AG04450 (cell line): ENCODE measurements at regions of chr3 and their contacts with region 1.

Region 1: DNA sequence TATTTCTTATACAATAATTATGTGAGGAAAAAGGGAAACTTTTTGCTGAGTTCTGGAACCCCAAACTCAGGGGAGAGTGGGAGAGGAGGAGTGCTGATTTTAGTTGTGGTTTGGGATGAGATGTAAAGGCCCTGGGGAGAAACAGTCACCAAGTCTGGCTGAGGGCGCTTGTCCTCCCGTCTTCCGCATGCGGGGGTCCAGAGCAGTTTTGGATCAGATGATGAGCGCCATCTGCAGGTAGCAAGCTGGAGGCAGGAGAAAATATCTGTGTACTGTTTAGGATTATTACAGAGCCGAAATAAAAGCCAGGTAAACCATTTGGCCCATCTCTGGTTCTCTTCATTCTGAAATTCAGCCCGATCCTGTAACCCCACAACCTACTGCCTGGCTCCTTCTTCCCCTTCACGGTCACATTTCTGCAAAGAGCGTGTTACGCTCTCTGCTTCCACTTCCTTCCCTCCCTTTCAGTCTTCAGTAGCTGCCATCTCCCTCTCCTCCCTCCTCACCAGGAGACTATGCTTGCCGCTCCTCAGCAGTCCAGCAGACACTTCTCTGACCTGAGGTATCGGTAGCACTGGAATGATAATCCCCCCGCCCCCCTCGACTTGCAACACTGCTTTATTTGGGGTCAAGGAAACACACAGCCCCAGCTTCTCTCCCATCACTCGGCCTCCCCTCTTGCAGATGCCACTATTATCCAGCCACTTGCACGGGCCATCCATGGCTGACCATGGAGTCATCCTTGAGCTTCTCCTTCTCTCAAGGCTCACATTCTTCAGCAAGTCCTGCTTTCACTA is 1.4 kb upstream of the PARP14 start:
- DNase-seq: peak; percentile 55
- H3K4me3 ChIP-seq: peak overlapping the region; percentile 43
- H3K27ac ChIP-seq: peak overlapping the region; percentile 34
- H3K27me3 ChIP-seq: no peaks in the 10 kb centered on the region
- CTCF ChIP-seq: peak; percentile 87

Region 2: GRCh38 chr3:121545574-121546455 is 1133.5 kb before region 1 on chr3 and contains the start of gene POLQ:
- CTCF ChIA-PET with region 1: interaction called, 10 read pairs
- POLR2A ChIA-PET with region 1: no interaction called
- DNase-seq: peak; percentile 85
- H3K4me3 ChIP-seq: peak within 1 kb of the TSS; percentile 82
- H3K27ac ChIP-seq: no peak within 1 kb of the TSS
- H3K27me3 ChIP-seq: no peaks in the 10 kb centered on the region
- CTCF ChIP-seq: no peak
- polyA plus RNA-seq, gene POLQ: 0.96 and 1.4 TPM in 2 replicates

Region 3: GRCh38 chr3:122415720-122416654 is 263.3 kb before region 1 on chr3 and contains the start of gene WDR5B:
- CTCF ChIA-PET with region 1: interaction called, 11 read pairs
- POLR2A ChIA-PET with region 1: no interaction called
- DNase-seq: peak; percentile 94
- H3K4me3 ChIP-seq: peak within 1 kb of the TSS; percentile 95
- H3K27ac ChIP-seq: peak within 1 kb of the TSS; percentile 90
- H3K27me3 ChIP-seq: no peaks in the 10 kb centered on the region
- CTCF ChIP-seq: 0 out of 2 replicates have a peak, but pooled peaks have one; percentile 23
- polyA plus RNA-seq, gene WDR5B: 5.7 and 8.5 TPM in 2 replicates

Region 4: GRCh38 chr3:122564155-122564912 is 114.9 kb before region 1 on chr3 and contains the starts of genes DTX3L and PARP9:
- CTCF ChIA-PET with region 1: interaction called, 129 read pairs
- POLR2A ChIA-PET with region 1: interaction called, 4 read pairs
- DNase-seq: no peak
- H3K4me3 ChIP-seq: peak within 1 kb of the TSS; percentile 82
- H3K27ac ChIP-seq: peak within 1 kb of the TSS; percentile 73
- H3K27me3 ChIP-seq: no peaks in the 10 kb centered on the region
- CTCF ChIP-seq: no peak
- polyA plus RNA-seq, gene DTX3L: 7.0 and 8.3 TPM in 2 replicates
- polyA plus RNA-seq, gene PARP9: 18.9 and 24.4 TPM in 2 replicates

Region 5: DNA sequence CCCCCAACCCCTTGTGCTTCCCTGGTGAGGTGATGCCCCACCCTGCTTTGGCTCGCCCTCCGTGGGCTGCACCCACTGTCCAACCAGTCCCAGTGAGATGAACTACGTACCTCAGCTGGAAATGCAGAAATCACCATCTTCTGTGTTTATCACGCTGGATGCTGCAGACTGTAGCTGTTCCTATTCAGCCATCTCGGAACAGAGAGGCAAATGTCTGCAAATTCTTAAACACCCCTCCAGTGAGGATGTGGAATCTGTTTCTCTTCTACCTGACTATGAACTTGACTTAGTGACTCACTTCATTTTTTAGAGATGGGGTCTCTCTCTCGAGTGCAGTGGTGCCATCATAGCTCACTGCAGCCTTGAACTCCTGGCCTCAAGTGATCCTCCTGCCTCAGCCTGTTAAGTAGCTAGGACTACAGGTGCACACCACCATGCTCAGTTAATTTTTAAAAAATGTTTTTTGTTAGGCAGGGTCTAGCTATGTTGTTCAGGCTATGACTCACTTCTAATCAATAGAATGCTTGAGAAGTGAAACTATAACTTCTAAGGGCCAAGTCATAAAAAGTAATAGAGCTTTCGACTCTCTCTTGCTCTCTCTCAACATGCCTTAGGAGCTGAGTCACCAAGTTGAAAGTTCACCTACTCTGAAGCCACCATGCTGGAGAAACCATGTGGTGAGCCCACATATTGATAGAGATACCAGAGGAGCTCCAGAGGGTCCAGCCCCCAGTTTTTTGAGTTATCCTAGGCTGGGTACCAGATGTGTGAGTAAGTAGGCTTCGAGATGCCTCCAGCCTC is 10.2 kb before region 1 on chr3:
- CTCF ChIA-PET with region 1: interaction called, 26 read pairs
- POLR2A ChIA-PET with region 1: no interaction called
- DNase-seq: peak; percentile 32
- H3K4me3 ChIP-seq: no peak overlapping the region
- H3K27ac ChIP-seq: no peak overlapping the region
- H3K27me3 ChIP-seq: no peaks in the 10 kb centered on the region
- CTCF ChIP-seq: no peak

Region 6: DNA sequence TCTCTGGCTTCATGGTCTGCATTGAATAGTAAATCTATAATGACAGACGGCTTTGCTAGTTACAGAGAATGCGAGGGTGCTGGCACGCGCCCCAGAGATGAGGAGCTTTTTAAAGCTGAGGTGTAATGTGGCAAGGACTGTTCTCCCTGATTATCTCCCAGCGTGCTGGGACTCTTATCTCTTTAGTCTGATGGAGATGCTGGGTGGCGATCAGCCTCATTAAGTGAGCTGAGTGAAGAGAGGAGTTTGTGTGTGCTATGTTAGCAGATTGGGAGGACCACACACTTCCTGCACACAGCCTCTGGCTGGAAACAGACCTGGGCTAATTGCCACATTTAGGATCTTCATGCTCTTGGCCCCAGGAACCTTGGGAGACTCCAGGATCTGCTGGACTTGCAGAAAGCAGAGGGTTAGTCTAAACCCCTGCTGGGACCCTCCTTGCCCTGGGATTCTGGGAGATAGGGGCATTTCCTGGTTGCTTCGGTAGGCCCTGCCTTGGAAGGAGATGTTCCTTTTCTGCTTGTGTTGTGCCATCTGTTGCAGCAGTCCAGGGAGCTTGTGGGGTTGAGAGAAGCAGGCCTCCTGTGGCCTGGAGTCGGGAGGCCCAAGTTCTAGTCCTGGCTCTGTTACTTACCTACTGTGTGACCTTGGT is 402.6 kb after region 1 on chr3:
- CTCF ChIA-PET with region 1: no interaction called
- POLR2A ChIA-PET with region 1: no interaction called
- DNase-seq: no peak
- H3K4me3 ChIP-seq: no peak overlapping the region
- H3K27ac ChIP-seq: no peak overlapping the region
- H3K27me3 ChIP-seq: no peaks in the 10 kb centered on the region
- CTCF ChIP-seq: no peak